MCF 10A (cell line): ENCODE measurements at regions of chr10 and their contacts with region 1.

Region 1: GRCh38 chr10:15106352-15107013 is 9.3 kb downstream of the RPP38 start:
- DNase-seq: peak; percentile 79
- H3K4me3 Mint-ChIP-seq: no peak overlapping the region
- H3K27ac Mint-ChIP-seq: no peak overlapping the region
- H3K4me1 Mint-ChIP-seq: no peaks in the 10 kb centered on the region
- H3K27me3 Mint-ChIP-seq: no peaks in the 10 kb centered on the region
- CTCF ChIP-seq: peak; percentile 83

Region 2: GRCh38 chr10:15084502-15084922 is 22.0 kb before region 1 on chr10:
- CTCF ChIA-PET with region 1: interaction called, 10 read pairs
- POLR2A ChIA-PET with region 1: interaction called, 3 read pairs
- intact Hi-C with region 1: no loop called
- DNase-seq: peak; percentile 97
- H3K4me3 Mint-ChIP-seq: peak overlapping the region; percentile 92
- H3K27ac Mint-ChIP-seq: no peak overlapping the region
- H3K4me1 Mint-ChIP-seq: peaks cover 7% of the 10 kb centered on the region
- H3K27me3 Mint-ChIP-seq: no peaks in the 10 kb centered on the region
- CTCF ChIP-seq: no peak

Region 3: DNA sequence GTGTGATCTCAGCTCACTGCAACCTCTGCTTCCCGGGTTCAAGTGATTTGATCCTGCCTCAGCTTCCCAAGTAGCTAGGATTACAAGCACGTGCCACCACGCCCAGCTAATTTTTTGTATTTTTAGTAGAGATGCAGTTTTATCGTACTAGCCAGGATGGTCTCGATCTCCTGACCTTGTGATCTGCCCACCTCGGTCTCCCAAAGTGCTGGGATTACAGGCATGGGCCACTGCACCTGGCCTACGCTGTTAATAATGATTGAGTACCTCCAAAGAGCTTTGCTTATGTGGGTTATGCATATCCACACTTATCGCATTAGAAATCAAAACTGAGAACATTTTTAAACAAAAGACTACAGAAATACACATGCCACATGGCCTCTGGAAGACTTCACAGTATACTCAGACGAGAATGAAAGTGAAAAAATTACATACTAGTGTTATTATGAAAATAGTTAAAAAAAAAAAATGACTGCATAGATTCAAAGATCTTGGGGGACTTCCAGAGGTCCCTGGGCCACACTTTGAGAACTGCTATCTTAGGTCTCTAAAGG is 16.1 kb after region 1 on chr10:
- CTCF ChIA-PET with region 1: interaction called, 17 read pairs
- POLR2A ChIA-PET with region 1: no interaction called
- intact Hi-C with region 1: no loop called
- DNase-seq: no peak
- H3K4me3 Mint-ChIP-seq: no peak overlapping the region
- H3K27ac Mint-ChIP-seq: no peak overlapping the region
- H3K4me1 Mint-ChIP-seq: peaks cover 6% of the 10 kb centered on the region
- H3K27me3 Mint-ChIP-seq: no peaks in the 10 kb centered on the region
- CTCF ChIP-seq: no peak